Activated CD4-positive, alpha-beta memory T cell treated with anti-CD3 and anti-CD28 coated beads for 36 hours (primary cell): ENCODE measurements at regions of chr10 and their contacts with region 1.

Region 1: GRCh38 chr10:43689955-43690771 is 41.5 kb upstream of the ZNF32 start:
- DNase-seq: peak; percentile 90
- H3K4me3 Mint-ChIP-seq: peak overlapping the region; percentile 76
- H3K27ac Mint-ChIP-seq: no peak overlapping the region
- H3K4me1 Mint-ChIP-seq: peaks cover 5% of the 10 kb centered on the region
- H3K27me3 Mint-ChIP-seq: peaks cover 8% of the 10 kb centered on the region

Region 2: GRCh38 chr10:43781480-43782361 is 91.6 kb after region 1 on chr10:
- CTCF ChIA-PET with region 1: interaction called, 14 read pairs
- POLR2A ChIA-PET with region 1: no interaction called
- intact Hi-C with region 1: loop called (anchors 2 kb)
- DNase-seq: peak; percentile 65
- H3K4me3 Mint-ChIP-seq: no peak overlapping the region
- H3K27ac Mint-ChIP-seq: no peak overlapping the region
- H3K4me1 Mint-ChIP-seq: peaks cover 19% of the 10 kb centered on the region
- H3K27me3 Mint-ChIP-seq: no peaks in the 10 kb centered on the region

Region 3: GRCh38 chr10:44030143-44030542 is 340.0 kb after region 1 on chr10:
- CTCF ChIA-PET with region 1: interaction called, 14 read pairs
- POLR2A ChIA-PET with region 1: no interaction called
- intact Hi-C with region 1: loop called (anchors 1 kb)
- DNase-seq: peak; percentile 53
- H3K4me3 Mint-ChIP-seq: no peak overlapping the region
- H3K27ac Mint-ChIP-seq: no peak overlapping the region
- H3K4me1 Mint-ChIP-seq: no peaks in the 10 kb centered on the region
- H3K27me3 Mint-ChIP-seq: peaks cover 7% of the 10 kb centered on the region

Region 4: DNA sequence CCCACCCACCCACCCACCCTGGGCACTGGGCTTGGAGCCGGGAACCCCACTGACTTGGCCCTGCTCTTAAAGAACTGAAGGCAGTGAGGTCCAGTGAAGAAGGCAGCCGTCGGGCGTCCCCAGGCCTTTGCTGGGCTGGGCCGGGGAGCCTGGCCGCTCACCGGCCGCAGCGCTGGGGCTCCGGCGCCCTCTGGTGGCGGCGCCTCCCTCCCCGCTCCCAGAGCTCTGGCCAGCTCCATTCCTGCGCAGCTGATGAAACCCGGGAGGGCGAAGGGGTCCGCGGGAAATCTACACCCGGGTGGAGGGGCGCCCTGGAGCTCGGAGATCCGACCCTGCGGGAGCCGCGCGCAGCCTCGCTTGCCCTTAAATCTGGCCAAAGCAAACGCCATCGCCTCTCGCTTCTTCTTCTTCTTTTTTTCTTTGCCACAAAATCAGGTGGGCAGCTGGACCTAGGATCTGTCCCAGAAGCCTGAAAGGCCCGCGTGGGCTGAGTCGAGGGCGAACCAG is 696.4 kb after region 1 on chr10:
- CTCF ChIA-PET with region 1: interaction called, 20 read pairs
- POLR2A ChIA-PET with region 1: no interaction called
- intact Hi-C with region 1: loop called (anchors 5 kb)
- DNase-seq: peak; percentile 40
- H3K4me3 Mint-ChIP-seq: no peak overlapping the region
- H3K27ac Mint-ChIP-seq: no peak overlapping the region
- H3K4me1 Mint-ChIP-seq: peaks cover 2% of the 10 kb centered on the region
- H3K27me3 Mint-ChIP-seq: peaks cover 37% of the 10 kb centered on the region